ENCODE measurements at regions of chr12 and their contacts with region 1.

Region 1: DNA sequence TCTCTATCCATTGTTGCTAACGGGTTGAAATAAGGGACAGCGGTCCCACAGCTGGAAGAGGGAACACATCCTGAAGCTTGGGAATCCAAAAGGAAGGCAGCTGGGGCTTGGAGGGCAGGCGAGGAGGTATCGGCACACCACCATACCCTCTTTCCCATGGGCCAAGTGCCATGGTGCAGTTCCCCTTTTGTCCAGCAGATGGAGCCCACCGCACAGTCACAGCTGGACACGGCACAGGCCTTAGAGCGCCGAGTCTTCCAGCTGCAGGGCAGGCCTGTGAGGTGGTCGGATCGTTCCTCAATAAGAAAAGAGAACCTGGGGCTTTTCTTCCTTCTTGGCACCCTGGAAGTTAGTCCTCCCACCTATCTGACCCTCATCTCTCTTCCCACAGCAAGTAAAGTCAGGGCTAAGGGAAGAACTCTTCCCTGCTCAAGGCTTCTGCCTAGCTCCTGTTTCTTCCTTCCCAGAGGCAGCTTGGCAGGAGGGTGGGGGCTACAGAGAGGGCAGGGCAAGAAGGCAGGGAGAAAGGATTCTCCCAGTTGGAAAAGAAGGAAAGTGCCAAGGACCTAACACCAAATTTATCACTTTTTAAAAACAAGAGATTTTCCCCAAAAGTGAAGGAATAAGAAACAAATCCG is 8.6 kb downstream of the PPP1R1A start:
- DNase-seq: peak; percentile 85 to 91
- ATAC-seq: peak; percentile 94 to 98 (median 96)
- H3K4me3 ChIP-seq: no peak overlapping the region
- H3K27ac ChIP-seq: no peak overlapping the region
- H3K4me1 ChIP-seq: no peaks in the 10 kb centered on the region
- H3K27me3 ChIP-seq: no peaks in the 10 kb centered on the region
- CTCF ChIP-seq: peak; percentile 100

Region 2: DNA sequence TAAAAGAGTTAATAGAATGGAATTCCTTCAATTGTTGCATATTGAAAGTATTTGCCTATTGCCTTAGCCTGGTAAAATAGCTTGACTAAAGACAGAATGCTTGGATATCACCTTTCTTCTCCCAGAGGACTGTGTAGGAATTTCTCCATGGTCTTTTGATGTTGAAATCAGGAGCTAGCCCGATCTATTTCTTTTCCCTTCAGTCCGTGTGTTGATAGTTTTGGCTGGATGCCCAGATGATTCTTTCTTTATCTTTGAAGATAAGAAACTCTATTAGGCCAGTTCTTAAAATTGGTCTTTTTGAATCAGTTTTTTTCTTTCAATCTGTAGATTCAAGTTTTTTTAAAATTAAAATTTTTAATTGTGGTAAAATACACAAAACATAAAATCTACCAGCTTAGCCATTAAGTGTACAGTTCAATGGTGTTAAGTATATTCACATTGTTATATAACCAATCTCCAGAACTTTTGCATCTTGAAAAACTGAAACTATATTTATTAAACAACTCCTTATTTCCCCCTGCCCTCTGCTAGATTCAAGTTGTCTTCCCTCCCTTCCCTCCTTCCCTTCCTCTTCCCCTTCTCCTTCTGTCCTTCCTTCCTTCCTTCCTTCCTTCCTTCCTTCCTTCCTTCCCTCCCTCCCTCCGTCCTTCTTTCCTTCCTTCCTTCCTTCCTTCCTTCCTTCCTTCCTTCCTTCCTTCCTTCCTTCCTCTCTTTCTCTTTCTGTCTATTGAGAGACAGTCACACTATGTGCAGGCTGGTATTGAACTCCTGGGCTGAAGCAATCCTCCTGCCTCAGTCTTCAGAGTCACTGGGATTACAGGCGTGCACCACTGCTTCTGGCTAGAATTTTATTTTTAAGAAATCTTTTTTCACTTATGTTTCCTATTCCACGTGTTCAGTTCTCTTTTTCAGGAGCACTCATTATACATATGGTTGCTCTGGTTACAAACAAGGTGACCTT is 44.8 kb after region 1 on chr12:
- intact Hi-C with region 1: loop called in 1 of 2 experiments (anchors 1 kb)
- DNase-seq: no peak
- ATAC-seq: no peak
- H3K4me3 ChIP-seq: no peak overlapping the region
- H3K27ac ChIP-seq: no peak overlapping the region
- H3K4me1 ChIP-seq: peaks cover 4% of the 10 kb centered on the region
- H3K27me3 ChIP-seq: peaks cover 0 to 17% (median 0%) of the 10 kb centered on the region in 3 donors
- CTCF ChIP-seq: no peak

Region 3: GRCh38 chr12:54950071-54950727 is 370.4 kb after region 1 on chr12:
- intact Hi-C with region 1: loop called in 1 of 2 experiments (anchors 5 kb)
- DNase-seq: no peak
- ATAC-seq: no peak
- H3K4me3 ChIP-seq: no peak overlapping the region
- H3K27ac ChIP-seq: no peak overlapping the region
- H3K4me1 ChIP-seq: no peaks in the 10 kb centered on the region
- H3K27me3 ChIP-seq: no peaks in the 10 kb centered on the region
- CTCF ChIP-seq: no peak